H1 (cell line): ENCODE measurements at regions of chr1 and their contacts with region 1.

Region 1: GRCh38 chr1:203273206-203273868 is 32.0 kb upstream of the BTG2 start:
- DNase-seq: peak; percentile 46 to 94
- H3K4me3 ChIP-seq: peak overlapping the region in 3 of 4 experiments; percentile 37 to 57 (median 52); a peak in 6 of 8 replicates
- H3K27ac ChIP-seq: no peak overlapping the region
- H3K4me1 ChIP-seq: peaks cover under 1 to 9% (median 7%) of the 10 kb centered on the region in 4 experiments; a peak in 6 of 7 replicates
- H3K27me3 ChIP-seq: peaks cover 0 to 31% (median 10%) of the 10 kb centered on the region in 4 experiments; a peak in 5 of 7 replicates
- CTCF ChIP-seq: peak; percentile 91 to 94 (median 92)
- EP300 ChIP-seq: no peak
- POLR2A ChIP-seq: no peak
- RAD21 ChIP-seq: peak; percentile 87 to 88

Region 2: GRCh38 chr1:203326830-203327683 is 53.7 kb after region 1 on chr1:
- CTCF ChIA-PET with region 1: interaction called, 785 read pairs
- POLR2A ChIA-PET with region 1: interaction called, 4 read pairs
- DNase-seq: peak in 1 of 2 experiments; percentile 94
- H3K4me3 ChIP-seq: peak overlapping the region; percentile 41 to 64 (median 46); a peak in 7 of 8 replicates
- H3K27ac ChIP-seq: no peak overlapping the region
- H3K4me1 ChIP-seq: peaks cover 8 to 30% (median 21%) of the 10 kb centered on the region in 4 experiments
- H3K27me3 ChIP-seq: peaks cover 0 to 24% (median 16%) of the 10 kb centered on the region in 4 experiments; a peak in 4 of 7 replicates
- CTCF ChIP-seq: peak in 1 of 3 experiments; percentile 37; a peak in 2 of 4 replicates
- EP300 ChIP-seq: no peak
- POLR2A ChIP-seq: peak in 1 of 2 experiments; percentile 29; a peak in 1 of 3 replicates
- RAD21 ChIP-seq: 0 out of 4 replicates have a peak, but pooled peaks of 1 of the 2 experiments have one; percentile 5